AG04449 (cell line): ENCODE measurements at regions of chr19 and their contacts with region 1.

Region 1: GRCh38 chr19:47428177-47428894 is 9.0 kb upstream of the MEIS3 start:
- DNase-seq: peak; percentile 75
- H3K4me3 ChIP-seq: peak overlapping the region; percentile 51
- CTCF ChIP-seq: no peak

Region 2: DNA sequence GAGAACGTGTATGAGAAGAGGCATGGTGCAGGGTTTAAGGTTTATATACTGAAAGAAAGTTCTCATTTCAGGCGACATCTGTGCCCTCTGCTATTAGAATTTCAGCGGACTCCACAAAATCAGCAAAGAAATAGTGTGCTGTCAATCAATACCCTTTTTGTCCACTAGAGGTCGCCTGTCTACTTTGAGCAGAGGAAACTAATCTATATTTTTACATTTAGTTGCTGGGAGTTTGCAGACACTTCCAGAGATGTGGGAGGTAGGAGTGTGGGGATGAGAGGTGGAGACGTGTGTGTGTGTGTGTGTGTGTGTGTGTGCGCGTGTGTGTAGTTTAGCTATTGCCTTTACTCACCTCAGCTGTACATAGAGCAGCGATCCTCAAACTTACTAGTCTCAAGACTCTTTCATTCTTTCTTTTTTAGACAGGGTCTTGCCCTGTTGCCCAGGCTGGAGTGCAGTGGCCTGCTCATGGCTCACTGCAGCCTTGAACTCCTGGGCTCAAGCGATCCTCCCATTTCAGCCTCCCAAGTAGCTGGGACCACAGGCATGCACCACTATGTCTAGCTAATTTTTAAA is 143.9 kb before region 1 on chr19:
- CTCF ChIA-PET with region 1: interaction called, 53 read pairs
- POLR2A ChIA-PET with region 1: no interaction called
- DNase-seq: no peak
- H3K4me3 ChIP-seq: no peak overlapping the region
- CTCF ChIP-seq: peak; percentile 67

Region 3: GRCh38 chr19:47296036-47296435 is 132.3 kb before region 1 on chr19:
- CTCF ChIA-PET with region 1: interaction called, 79 read pairs
- POLR2A ChIA-PET with region 1: no interaction called
- DNase-seq: no peak
- H3K4me3 ChIP-seq: no peak overlapping the region
- CTCF ChIP-seq: peak; percentile 66

Region 4: DNA sequence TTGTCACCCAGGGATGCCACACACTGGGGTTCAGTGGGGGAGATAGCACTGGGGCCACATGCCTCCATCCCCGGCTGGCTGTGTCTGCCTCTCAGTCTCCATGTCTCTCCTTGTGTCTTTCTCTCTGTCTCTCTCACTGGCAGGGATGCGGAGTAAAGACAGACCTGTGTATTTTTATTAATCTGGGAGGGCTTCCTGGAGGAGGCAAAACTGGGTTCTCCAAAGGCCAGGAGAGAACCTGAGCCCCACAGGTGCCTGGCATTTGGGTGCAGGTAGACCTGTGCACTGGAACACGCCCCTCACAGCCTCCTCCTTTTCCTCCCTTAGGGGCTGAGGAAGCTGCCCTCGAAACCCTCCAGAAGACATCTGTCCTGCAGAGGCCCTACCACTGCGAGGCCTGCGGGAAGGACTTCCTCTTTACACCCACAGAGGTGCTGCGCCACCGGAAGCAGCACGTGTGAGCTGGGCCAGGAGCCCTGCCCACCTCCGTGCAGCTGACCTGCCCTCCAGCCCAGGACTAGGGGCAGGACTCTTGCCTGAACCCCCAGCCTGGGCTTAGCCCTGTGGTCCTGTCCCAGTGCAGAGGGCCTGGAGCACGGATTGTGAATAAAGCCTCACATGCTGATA is 46.6 kb before region 1 on chr19:
- CTCF ChIA-PET with region 1: no interaction called
- POLR2A ChIA-PET with region 1: no interaction called
- DNase-seq: no peak
- H3K4me3 ChIP-seq: no peak overlapping the region
- CTCF ChIP-seq: no peak

Region 5: GRCh38 chr19:47697863-47698609 is 269.7 kb after region 1 on chr19:
- CTCF ChIA-PET with region 1: interaction called, 867 read pairs
- POLR2A ChIA-PET with region 1: no interaction called
- DNase-seq: no peak
- H3K4me3 ChIP-seq: no peak overlapping the region
- CTCF ChIP-seq: peak; percentile 99